Gastrocnemius medialis (tissue), 4 donors: ENCODE measurements at regions of chr12 and their contacts with region 1.

Region 1: GRCh38 chr12:12696562-12697383 is 790 bp upstream of the GPR19 start:
- DNase-seq: peak; percentile 81 to 86
- ATAC-seq: peak; percentile 93
- H3K4me3 ChIP-seq: peak overlapping the region; percentile 60 to 81 (median 76)
- H3K27ac ChIP-seq: peak overlapping the region; percentile 87 to 98 (median 97)
- H3K4me1 ChIP-seq: peaks cover 5 to 6% of the 10 kb centered on the region in 2 donors
- H3K27me3 ChIP-seq: no peaks in the 10 kb centered on the region
- CTCF ChIP-seq: no peak
- POLR2A ChIP-seq: peak; percentile 65 to 81

Region 2: DNA sequence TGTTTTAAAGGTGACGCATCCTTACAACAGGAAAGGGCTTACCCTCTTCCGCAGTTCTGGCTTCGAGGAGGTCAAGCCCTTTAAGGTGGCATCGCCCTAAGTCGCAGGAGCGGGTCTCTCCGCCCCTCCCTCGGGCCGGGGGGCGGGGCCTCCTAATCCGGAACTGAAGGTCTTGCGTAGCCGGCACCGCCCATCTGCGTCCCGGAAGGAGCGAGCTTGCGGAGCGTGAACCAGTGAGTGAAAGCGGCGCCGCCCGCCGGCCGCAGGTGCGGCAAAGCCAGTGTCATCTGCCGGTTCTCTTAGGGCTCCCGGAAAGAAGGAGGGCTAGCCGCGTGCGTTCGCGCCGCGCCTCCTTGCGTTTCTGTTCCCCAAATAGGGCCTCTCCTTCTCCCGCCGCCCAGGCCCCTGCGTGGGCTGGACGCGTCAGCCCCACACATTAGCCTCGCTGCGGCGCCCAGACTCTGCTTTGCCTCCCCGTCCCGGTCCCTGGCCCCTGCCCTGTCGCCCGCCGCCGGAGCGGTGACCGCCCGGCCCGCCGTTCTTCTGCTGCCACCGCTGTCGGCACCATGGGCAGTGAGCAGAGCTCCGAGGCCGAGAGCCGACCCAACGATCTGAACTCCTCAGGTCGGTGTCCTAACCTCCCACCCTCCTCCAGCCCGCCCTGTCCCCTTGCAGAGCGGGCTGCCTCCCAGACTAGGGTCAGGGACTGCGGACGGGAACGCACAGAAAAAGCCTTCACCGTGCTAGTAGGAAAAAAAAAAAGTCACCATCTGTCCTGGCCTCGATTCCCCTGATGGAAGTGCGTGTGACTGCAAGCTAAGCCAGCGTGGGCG is 339.7 kb before region 1 on chr12 and contains the start of gene BORCS5:
- in situ Hi-C with region 1: loop called in 1 of 4 experiments (anchors 25 kb)
- intact Hi-C with region 1: loop called (anchors 1 kb)
- DNase-seq: peak; percentile 92 to 96
- ATAC-seq: peak; percentile 95 to 96
- H3K4me3 ChIP-seq: peak within 1 kb of the TSS; percentile 79 to 97 (median 94)
- H3K27ac ChIP-seq: peak within 1 kb of the TSS; percentile 96 to 99 (median 98)
- H3K4me1 ChIP-seq: peaks cover 15 to 16% of the 10 kb centered on the region in 2 donors
- H3K27me3 ChIP-seq: no peaks in the 10 kb centered on the region
- CTCF ChIP-seq: peak in 3 of 5 experiments; percentile 8 to 29 (median 25)
- POLR2A ChIP-seq: peak; percentile 96 to 98
- total RNA-seq, gene BORCS5: 13.0 to 13.9 (median 13.4) TPM

Region 3: GRCh38 chr12:12521044-12521485 is 175.7 kb before region 1 on chr12:
- in situ Hi-C with region 1: no loop called
- intact Hi-C with region 1: no loop called
- DNase-seq: no peak
- ATAC-seq: no peak
- H3K4me3 ChIP-seq: no peak overlapping the region
- H3K27ac ChIP-seq: peak overlapping the region; percentile 32 to 63 (median 48)
- H3K4me1 ChIP-seq: peaks cover 47 to 55% of the 10 kb centered on the region in 2 donors
- H3K27me3 ChIP-seq: no peaks in the 10 kb centered on the region
- CTCF ChIP-seq: no peak
- POLR2A ChIP-seq: no peak

Region 4: GRCh38 chr12:12716793-12717585 is 20.2 kb after region 1 on chr12 and contains the start of gene CDKN1B:
- in situ Hi-C with region 1: no loop called
- intact Hi-C with region 1: loop called (anchors 2 kb)
- DNase-seq: peak; percentile 86 to 91
- ATAC-seq: peak; percentile 84 to 86
- H3K4me3 ChIP-seq: peak within 1 kb of the TSS; percentile 72 to 99 (median 92)
- H3K27ac ChIP-seq: peak within 1 kb of the TSS; percentile 96 to 99 (median 98)
- H3K4me1 ChIP-seq: peaks cover 50 to 60% of the 10 kb centered on the region in 2 donors
- H3K27me3 ChIP-seq: no peaks in the 10 kb centered on the region
- CTCF ChIP-seq: peak in 1 of 5 experiments; percentile 5
- POLR2A ChIP-seq: peak; percentile 81 to 92
- total RNA-seq, gene CDKN1B: 43.6 to 76.4 (median 56.6) TPM

Region 5: GRCh38 chr12:12736759-12737676 is 40.2 kb after region 1 on chr12:
- in situ Hi-C with region 1: no loop called
- intact Hi-C with region 1: loop called (anchors 5 kb)
- DNase-seq: no peak
- ATAC-seq: peak; percentile 83 to 86
- H3K4me3 ChIP-seq: peak overlapping the region in 2 of 4 donors; percentile 1 to 35
- H3K27ac ChIP-seq: peak overlapping the region; percentile 28 to 47 (median 44)
- H3K4me1 ChIP-seq: peaks cover 5 to 16% of the 10 kb centered on the region in 2 donors
- H3K27me3 ChIP-seq: no peaks in the 10 kb centered on the region
- CTCF ChIP-seq: peak in 4 of 5 experiments; percentile 35 to 65 (median 50)
- POLR2A ChIP-seq: no peak